Aorta (tissue), 5 donors: ENCODE measurements at regions of chr17 and their contacts with region 1.

Region 1: DNA sequence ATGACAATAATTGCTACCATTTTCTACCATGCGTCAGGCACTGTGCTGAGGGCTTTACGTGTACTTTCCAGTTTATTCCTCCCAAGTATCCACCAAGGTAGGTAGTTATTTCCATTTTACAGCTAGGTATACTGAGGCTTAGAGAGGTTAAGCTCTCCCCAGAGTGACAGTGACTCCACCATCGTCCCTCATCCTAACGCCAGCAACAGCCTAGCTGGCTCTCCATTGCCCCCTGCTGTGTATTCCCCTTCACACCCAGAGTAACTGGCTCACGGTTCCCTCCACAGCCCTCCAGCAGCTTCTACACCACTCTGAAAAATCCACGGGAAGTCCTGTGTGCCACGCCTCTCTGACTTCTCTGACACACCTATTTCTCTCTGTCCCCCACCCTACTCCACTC is 7.1 kb upstream of the ASGR1 start:
- DNase-seq: peak in 1 of 2 donors; percentile 44
- ATAC-seq: no peak
- H3K4me3 ChIP-seq: no peak overlapping the region
- H3K27ac ChIP-seq: no peak overlapping the region
- H3K4me1 ChIP-seq: no peaks in the 10 kb centered on the region
- H3K27me3 ChIP-seq: no peaks in the 10 kb centered on the region

Region 2: GRCh38 chr17:5329784-5330557 is 1856.3 kb before region 1 on chr17:
- intact Hi-C with region 1: loop called in 1 of 2 experiments (anchors 10 kb)
- DNase-seq: no peak
- ATAC-seq: no peak
- H3K4me3 ChIP-seq: no peak overlapping the region
- H3K27ac ChIP-seq: no peak overlapping the region
- H3K4me1 ChIP-seq: no peaks in the 10 kb centered on the region
- H3K27me3 ChIP-seq: no peaks in the 10 kb centered on the region